Activated CD4-positive, alpha-beta T cell treated with anti-CD3 and anti-CD28 coated beads, Interleukin-2, amount 10 ng/mL, durations not matched to agents 24 days and 14 days (primary cell): ENCODE measurements at regions of chr14 and their contacts with region 1.

Region 1: GRCh38 chr14:101823511-101824120 is 62.1 kb downstream of the PPP2R5C start:
- DNase-seq: peak; percentile 93
- H3K4me3 Mint-ChIP-seq: peak overlapping the region; percentile 81
- H3K27ac Mint-ChIP-seq: peak overlapping the region; percentile 96
- H3K4me1 Mint-ChIP-seq: peaks cover 76% of the 10 kb centered on the region
- H3K27me3 Mint-ChIP-seq: no peaks in the 10 kb centered on the region

Region 2: DNA sequence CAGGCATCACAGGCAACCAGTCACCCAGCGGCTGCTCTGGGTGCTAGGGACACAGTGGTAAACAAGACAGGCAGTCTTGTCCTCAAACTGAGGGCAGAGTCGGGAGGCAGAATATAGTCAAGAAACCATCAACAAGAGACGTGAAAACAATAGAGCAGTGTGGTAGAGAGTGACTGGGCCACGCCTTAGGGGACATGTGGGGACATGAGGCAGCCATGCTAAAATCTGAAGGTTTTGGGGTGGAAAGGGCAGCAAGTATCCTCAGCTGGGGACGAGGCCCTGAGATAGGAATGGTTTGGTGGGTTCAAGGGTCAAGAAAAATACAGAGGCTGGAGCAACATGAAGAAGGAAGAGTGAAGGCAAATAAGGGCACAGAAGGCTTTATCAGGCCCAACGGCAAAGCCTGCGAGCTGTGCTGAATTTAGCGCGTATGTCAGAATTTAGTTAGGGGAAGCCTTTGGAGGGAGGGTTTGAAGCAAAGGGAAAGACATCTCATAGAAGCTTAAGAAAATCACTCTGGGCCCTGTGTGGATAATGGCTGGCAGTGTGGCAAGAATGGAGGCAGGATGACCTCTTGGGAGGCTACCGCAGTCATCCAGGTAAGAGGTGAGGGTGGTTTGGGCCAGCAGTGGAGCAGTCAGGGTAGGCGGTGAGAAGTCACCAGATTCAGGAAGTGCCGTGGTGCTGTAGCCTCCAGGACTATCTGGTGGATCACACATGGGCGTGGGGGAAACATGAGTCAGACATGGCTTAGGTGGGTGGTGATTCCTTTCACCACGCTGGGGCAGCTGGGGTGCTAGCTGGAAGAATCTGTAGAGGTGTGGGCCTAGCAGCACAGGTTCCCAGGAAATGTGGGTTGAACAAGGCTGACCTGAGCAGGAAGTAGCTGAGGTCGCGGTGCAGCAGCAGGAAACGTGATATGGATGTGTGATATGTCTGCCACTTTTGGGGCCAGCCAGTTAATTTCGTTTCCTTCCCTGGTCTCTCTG is 1755.4 kb before region 1 on chr14:
- intact Hi-C with region 1: loop called (anchors 5 kb)
- DNase-seq: peak; percentile 95
- H3K4me3 Mint-ChIP-seq: peak overlapping the region; percentile 87
- H3K27ac Mint-ChIP-seq: peak overlapping the region; percentile 98
- H3K4me1 Mint-ChIP-seq: peaks cover 77% of the 10 kb centered on the region
- H3K27me3 Mint-ChIP-seq: no peaks in the 10 kb centered on the region

Region 3: DNA sequence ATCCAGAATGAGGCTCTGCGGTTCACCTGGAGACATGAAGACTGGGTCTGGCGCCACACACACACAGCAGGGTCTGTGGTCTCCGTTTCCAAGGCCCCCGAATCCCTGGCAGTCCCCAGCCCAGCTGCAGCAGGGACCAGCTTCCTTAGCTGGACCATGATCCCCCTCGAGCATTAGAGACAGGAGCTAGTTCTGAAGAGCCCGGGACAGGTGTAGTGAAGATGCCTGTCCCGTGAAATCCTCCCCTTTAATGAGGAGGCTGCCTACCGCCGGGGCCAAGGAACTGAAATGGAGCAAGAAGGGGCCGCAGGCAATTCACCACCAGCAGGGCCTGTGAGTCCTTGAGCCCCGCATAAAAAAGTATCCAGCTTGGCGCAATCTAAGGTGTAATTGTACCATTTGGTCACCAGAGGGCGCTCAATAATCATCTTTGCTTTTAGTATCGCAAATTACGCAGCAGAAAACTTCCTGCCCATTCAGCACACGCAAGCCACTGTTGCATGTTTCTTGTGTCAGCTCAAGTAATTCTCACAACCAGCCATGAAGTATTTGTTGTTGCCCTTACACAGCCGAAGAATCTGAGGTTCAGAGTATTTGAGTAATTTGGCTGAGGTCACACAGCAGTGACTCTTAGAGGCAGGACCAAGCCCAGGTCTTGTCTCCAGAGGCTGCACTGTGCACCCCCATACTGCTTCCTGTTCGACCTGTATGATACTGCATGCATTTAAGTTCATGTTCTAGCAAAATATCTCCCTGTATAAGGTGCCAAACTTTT is 116.4 kb before region 1 on chr14:
- intact Hi-C with region 1: loop called (anchors 5 kb)
- DNase-seq: peak; percentile 92
- H3K4me3 Mint-ChIP-seq: peak overlapping the region; percentile 56
- H3K27ac Mint-ChIP-seq: peak overlapping the region; percentile 79
- H3K4me1 Mint-ChIP-seq: peaks cover 24% of the 10 kb centered on the region
- H3K27me3 Mint-ChIP-seq: peaks cover 21% of the 10 kb centered on the region

Region 4: GRCh38 chr14:101791919-101792572 is 31.6 kb before region 1 on chr14:
- intact Hi-C with region 1: loop called (anchors 2 kb)
- DNase-seq: peak; percentile 63
- H3K4me3 Mint-ChIP-seq: peak overlapping the region; percentile 64
- H3K27ac Mint-ChIP-seq: peak overlapping the region; percentile 54
- H3K4me1 Mint-ChIP-seq: peaks cover 17% of the 10 kb centered on the region
- H3K27me3 Mint-ChIP-seq: no peaks in the 10 kb centered on the region

Region 5: DNA sequence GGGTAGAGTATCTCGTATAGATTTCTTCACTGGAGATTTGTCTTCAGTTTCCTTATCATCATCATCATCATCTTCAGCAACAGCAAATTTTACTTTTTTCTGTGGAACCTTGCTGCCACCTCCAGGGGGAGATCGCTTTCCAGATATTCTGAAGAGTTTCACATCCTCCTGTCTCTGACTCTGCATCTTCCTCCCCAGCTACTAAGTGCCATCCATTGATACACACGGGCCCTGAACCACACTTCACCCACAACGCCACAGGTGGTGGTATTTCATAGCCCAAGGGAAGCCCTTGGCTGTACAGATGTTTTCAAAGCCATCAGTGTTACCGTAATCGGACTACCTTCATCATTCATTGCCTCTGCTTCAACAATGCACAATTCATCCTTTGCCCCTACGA is 20.0 kb after region 1 on chr14:
- intact Hi-C with region 1: loop called (anchors 1 kb)
- DNase-seq: peak; percentile 84
- H3K4me3 Mint-ChIP-seq: no peak overlapping the region
- H3K27ac Mint-ChIP-seq: peak overlapping the region; percentile 79
- H3K4me1 Mint-ChIP-seq: peaks cover 64% of the 10 kb centered on the region
- H3K27me3 Mint-ChIP-seq: no peaks in the 10 kb centered on the region

Region 6: GRCh38 chr14:101947906-101948665 is 124.5 kb after region 1 on chr14:
- intact Hi-C with region 1: loop called (anchors 1 kb)
- DNase-seq: peak; percentile 100
- H3K4me3 Mint-ChIP-seq: peak overlapping the region; percentile 95
- H3K27ac Mint-ChIP-seq: peak overlapping the region; percentile 97
- H3K4me1 Mint-ChIP-seq: peaks cover 17% of the 10 kb centered on the region
- H3K27me3 Mint-ChIP-seq: peaks cover 22% of the 10 kb centered on the region

Region 7: DNA sequence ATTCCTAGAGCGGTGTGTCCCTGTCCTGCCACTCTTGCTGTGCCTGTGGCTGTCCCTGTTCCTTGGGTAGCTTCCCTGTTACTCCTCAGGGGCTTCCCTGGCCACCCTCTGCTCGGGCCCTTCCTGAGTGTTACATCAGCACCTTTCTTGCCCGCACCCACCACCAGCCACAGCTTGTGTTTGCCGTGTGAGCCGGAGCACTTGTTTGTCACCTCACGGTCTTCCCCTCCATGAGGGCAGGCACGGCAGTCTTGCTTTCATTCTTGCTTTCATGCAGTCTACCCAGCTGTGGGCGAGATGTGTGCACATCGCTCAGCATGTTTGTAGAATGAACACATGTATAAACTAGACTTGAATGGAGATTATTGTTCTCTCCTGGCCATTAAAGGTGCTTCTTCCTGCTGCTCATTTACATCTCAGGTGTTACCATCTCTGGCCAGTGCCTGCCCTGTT is 995.6 kb after region 1 on chr14:
- intact Hi-C with region 1: loop called (anchors 10 kb)
- DNase-seq: peak; percentile 90
- H3K4me3 Mint-ChIP-seq: peak overlapping the region; percentile 83
- H3K27ac Mint-ChIP-seq: peak overlapping the region; percentile 94
- H3K4me1 Mint-ChIP-seq: peaks cover 70% of the 10 kb centered on the region
- H3K27me3 Mint-ChIP-seq: no peaks in the 10 kb centered on the region